HCT116 (cell line): ENCODE measurements at regions of chr16 and their contacts with region 1.

Region 1: DNA sequence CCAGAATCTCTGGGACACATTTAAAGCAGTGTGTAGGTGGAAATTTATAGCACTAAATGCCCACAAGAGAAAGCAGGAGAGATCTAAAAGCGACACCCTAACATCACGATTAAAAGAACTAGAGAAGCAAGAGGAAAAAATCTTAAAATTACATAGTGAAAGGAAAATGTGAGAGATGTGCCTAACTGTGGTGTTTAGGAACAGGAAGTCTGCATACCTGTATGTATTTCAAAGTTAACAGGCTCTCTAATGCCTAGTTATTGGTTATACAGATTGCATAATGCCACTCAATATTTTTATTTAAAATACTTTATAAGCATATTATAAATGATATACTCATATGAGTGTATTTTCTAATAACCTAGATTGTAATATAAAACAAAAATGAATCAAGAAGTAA is 25.9 kb downstream of the ZNF267 start:
- DNase-seq: no peak
- ATAC-seq: no peak
- H3K4me3 ChIP-seq: no peak overlapping the region
- H3K27ac ChIP-seq: no peak overlapping the region
- H3K4me1 ChIP-seq: no peaks in the 10 kb centered on the region
- H3K27me3 ChIP-seq: no peaks in the 10 kb centered on the region
- CTCF ChIP-seq: no peak
- POLR2A ChIP-seq: no peak
- RAD21 ChIP-seq: no peak

Region 2: GRCh38 chr16:31745900-31746299 is 153.6 kb before region 1 on chr16:
- CTCF ChIA-PET with region 1: no interaction called
- POLR2A ChIA-PET with region 1: no interaction called
- RAD21 ChIA-PET with region 1: no interaction called
- intact Hi-C with region 1: loop called (anchors 5 kb)
- DNase-seq: no peak
- ATAC-seq: no peak
- H3K4me3 ChIP-seq: no peak overlapping the region
- H3K27ac ChIP-seq: no peak overlapping the region
- H3K4me1 ChIP-seq: no peaks in the 10 kb centered on the region
- H3K27me3 ChIP-seq: no peaks in the 10 kb centered on the region
- CTCF ChIP-seq: no peak
- POLR2A ChIP-seq: no peak
- RAD21 ChIP-seq: no peak

Region 3: DNA sequence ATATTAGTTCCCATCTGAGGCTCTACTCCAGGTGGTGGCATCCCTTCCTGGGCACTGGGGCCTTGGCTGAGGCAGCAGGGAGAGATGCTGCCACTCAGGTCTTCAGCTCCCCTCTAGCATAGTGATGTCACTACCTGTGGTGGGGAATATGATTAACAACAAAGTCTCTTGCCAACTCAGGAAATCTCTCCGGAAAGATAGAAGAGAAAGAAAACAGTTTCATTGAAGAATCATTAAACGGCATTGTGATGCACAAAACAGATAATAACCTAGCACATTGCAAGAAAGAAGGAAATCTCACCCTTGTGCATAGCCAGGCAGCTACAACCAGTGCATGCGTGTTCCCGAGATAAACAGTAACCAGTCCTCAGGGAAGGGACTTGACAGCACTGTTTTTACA is 38.0 kb before region 1 on chr16:
- CTCF ChIA-PET with region 1: no interaction called
- POLR2A ChIA-PET with region 1: no interaction called
- RAD21 ChIA-PET with region 1: no interaction called
- intact Hi-C with region 1: no loop called
- DNase-seq: no peak
- ATAC-seq: no peak
- H3K4me3 ChIP-seq: no peak overlapping the region
- H3K27ac ChIP-seq: no peak overlapping the region
- H3K4me1 ChIP-seq: no peaks in the 10 kb centered on the region
- H3K27me3 ChIP-seq: peaks cover 3% of the 10 kb centered on the region; the same call in 1 of the 2 replicates
- CTCF ChIP-seq: no peak
- POLR2A ChIP-seq: no peak
- RAD21 ChIP-seq: no peak

Region 4: DNA sequence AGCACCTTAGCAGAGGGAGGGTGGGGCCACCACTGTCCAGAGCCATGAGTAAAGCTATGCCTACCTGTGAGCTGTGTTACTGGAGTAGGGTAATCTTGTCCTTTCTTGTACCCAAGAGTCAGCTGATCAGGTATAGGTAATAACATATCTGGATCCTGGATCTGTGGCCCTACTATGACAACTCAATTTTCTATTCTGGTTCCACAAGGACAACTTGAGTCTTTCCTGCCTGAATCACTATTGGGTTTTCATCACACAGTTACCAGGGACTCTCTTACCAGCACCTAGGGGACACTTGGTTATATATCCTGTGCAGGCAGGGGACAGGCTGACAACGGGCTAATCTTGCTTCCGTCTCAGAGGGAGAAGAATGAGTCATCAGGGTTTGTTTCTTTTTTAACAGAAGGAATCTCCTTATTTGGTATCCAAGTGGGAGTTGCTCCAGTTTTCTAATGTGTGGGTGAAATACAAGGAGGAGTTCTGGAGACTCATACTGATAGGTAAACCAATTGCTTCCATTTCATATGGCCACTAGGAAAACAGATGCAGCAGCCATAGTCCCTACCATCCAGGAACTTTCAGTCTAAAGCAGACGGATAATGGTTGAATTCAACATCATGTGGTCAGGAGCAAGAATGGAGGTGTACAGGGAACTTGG is 19.1 kb before region 1 on chr16:
- CTCF ChIA-PET with region 1: no interaction called
- POLR2A ChIA-PET with region 1: no interaction called
- RAD21 ChIA-PET with region 1: no interaction called
- intact Hi-C with region 1: no loop called
- DNase-seq: no peak
- ATAC-seq: peak; percentile 63
- H3K4me3 ChIP-seq: no peak overlapping the region
- H3K27ac ChIP-seq: no peak overlapping the region
- H3K4me1 ChIP-seq: peaks cover 0 to 31% of the 10 kb centered on the region in 2 experiments; a peak in 2 of 4 replicates
- H3K27me3 ChIP-seq: no peaks in the 10 kb centered on the region
- CTCF ChIP-seq: no peak
- POLR2A ChIP-seq: no peak
- RAD21 ChIP-seq: no peak